ENCODE measurements at regions of chr1 and their contacts with region 1.

Region 1: GRCh38 chr1:80008934-80009333 is 1002.4 kb upstream of the ADGRL4 start:
- DNase-seq: no peak
- H3K4me3 ChIP-seq: no peak overlapping the region
- H3K27ac ChIP-seq: no peak overlapping the region
- H3K27me3 ChIP-seq: no peaks in the 10 kb centered on the region
- CTCF ChIP-seq: no peak

Region 2: GRCh38 chr1:79929356-79929755 is 79.6 kb before region 1 on chr1:
- CTCF ChIA-PET with region 1: interaction called, 10 read pairs
- POLR2A ChIA-PET with region 1: no interaction called
- DNase-seq: no peak
- H3K4me3 ChIP-seq: no peak overlapping the region
- H3K27ac ChIP-seq: no peak overlapping the region
- H3K27me3 ChIP-seq: no peaks in the 10 kb centered on the region
- CTCF ChIP-seq: no peak